Activated CD4-positive, alpha-beta memory T cell treated with anti-CD3 and anti-CD28 coated beads for 36 hours (primary cell): ENCODE measurements at regions of chr17 and their contacts with region 1.

Region 1: GRCh38 chr17:19648475-19649406 is at the start of gene ALDH3A2:
- DNase-seq: peak; percentile 97
- H3K4me3 Mint-ChIP-seq: peak within 1 kb of the TSS; percentile 91
- H3K27ac Mint-ChIP-seq: peak within 1 kb of the TSS; percentile 86
- H3K4me1 Mint-ChIP-seq: peaks cover 36% of the 10 kb centered on the region
- H3K27me3 Mint-ChIP-seq: no peaks in the 10 kb centered on the region
- total RNA-seq, gene ALDH3A2: 27.3 to 35.7 TPM

Region 2: GRCh38 chr17:19338031-19338990 is 310.4 kb before region 1 on chr17:
- CTCF ChIA-PET with region 1: no interaction called
- POLR2A ChIA-PET with region 1: no interaction called
- intact Hi-C with region 1: no loop called
- DNase-seq: peak; percentile 77
- H3K4me3 Mint-ChIP-seq: no peak overlapping the region
- H3K27ac Mint-ChIP-seq: no peak overlapping the region
- H3K4me1 Mint-ChIP-seq: no peaks in the 10 kb centered on the region
- H3K27me3 Mint-ChIP-seq: peaks cover 11% of the 10 kb centered on the region

Region 3: GRCh38 chr17:19377602-19378392 is 270.9 kb before region 1 on chr17:
- CTCF ChIA-PET with region 1: no interaction called
- POLR2A ChIA-PET with region 1: no interaction called
- intact Hi-C with region 1: loop called (anchors 5 kb)
- DNase-seq: peak; percentile 98
- H3K4me3 Mint-ChIP-seq: peak overlapping the region; percentile 97
- H3K27ac Mint-ChIP-seq: peak overlapping the region; percentile 99
- H3K4me1 Mint-ChIP-seq: peaks cover 16% of the 10 kb centered on the region
- H3K27me3 Mint-ChIP-seq: no peaks in the 10 kb centered on the region

Region 4: GRCh38 chr17:19507775-19508576 is 140.8 kb before region 1 on chr17:
- CTCF ChIA-PET with region 1: interaction called, 50 read pairs
- POLR2A ChIA-PET with region 1: interaction called, 3 read pairs
- intact Hi-C with region 1: loop called (anchors 2 kb)
- DNase-seq: peak; percentile 90
- H3K4me3 Mint-ChIP-seq: peak overlapping the region; percentile 84
- H3K27ac Mint-ChIP-seq: peak overlapping the region; percentile 90
- H3K4me1 Mint-ChIP-seq: peaks cover 8% of the 10 kb centered on the region
- H3K27me3 Mint-ChIP-seq: peaks cover 3% of the 10 kb centered on the region

Region 5: DNA sequence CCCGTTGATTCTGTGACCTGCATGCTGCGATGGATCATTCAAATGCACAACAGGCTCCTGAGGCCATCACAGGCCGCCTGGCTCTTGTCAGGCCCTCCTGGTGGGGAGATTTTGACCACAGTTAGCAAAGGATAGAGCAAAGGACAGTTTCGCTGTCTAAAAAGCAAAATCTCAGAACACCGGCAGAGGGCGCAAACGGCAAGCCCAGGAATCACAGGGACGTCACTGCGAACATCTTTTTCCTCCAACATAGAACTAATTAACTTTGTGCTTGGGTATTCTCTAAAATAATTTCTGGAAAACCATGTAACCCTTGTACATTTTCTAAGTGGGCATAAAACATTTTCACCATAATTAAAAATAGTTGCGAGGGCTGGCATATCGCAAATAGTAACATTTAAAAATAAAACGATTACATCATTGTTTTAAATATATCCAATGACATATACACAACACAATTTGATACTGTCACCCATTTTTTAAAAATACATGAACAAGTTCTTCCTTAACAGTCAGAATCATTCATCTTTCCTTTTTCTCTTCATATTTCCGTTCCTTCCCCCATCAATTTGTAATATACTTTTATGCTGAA is 134.7 kb before region 1 on chr17:
- CTCF ChIA-PET with region 1: interaction called, 50 read pairs
- POLR2A ChIA-PET with region 1: interaction called, 3 read pairs
- intact Hi-C with region 1: loop called (anchors 2 kb)
- DNase-seq: peak; percentile 76
- H3K4me3 Mint-ChIP-seq: no peak overlapping the region
- H3K27ac Mint-ChIP-seq: no peak overlapping the region
- H3K4me1 Mint-ChIP-seq: peaks cover 3% of the 10 kb centered on the region
- H3K27me3 Mint-ChIP-seq: no peaks in the 10 kb centered on the region

Region 6: DNA sequence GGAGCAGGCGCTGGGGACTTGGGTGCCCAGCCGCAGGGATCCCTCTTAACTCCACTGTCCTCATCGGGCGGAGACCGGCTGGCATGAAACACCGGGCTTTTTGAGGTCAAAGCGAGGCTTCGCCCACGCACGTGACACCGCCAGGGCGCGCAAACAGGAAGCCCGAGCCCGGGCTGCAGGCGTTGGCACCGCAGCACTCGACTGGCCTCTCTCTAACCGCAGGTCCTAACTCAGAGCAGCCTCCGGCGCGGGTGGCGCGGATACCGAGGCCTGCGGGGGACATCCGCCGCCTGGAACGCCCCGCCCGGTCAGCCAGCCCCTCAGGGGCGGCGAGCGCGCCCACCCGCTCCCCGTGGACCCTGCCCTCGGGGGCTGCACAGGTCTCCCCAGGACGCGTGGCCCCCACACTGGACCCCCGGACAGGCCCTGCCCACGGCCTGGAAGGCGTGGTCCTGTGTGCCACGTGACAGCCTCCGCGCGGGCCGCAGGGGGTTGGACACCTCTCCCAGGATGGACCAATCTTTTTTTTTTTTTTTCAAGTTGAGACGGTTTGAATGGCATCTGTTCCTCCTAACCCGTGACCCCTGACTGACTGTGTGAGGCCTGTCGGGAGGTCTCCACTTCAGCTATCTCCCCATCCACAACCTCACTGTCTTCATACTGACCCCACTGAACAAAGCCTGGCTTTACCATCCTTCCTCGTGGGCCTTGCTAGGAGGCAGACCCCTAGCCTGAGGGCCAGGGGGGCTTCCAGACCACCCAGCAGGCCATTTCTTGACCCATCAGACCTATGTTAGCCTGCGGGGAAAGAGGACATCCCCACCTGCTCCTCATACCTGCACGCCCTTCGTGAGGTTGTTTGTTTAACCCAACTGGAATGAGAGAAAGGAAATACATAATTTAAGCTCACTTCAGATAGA is 76.0 kb after region 1 on chr17:
- CTCF ChIA-PET with region 1: no interaction called
- POLR2A ChIA-PET with region 1: interaction called, 3 read pairs
- intact Hi-C with region 1: loop called (anchors 1 kb)
- DNase-seq: peak; percentile 86
- H3K4me3 Mint-ChIP-seq: peak overlapping the region; percentile 54
- H3K27ac Mint-ChIP-seq: peak overlapping the region; percentile 29
- H3K4me1 Mint-ChIP-seq: peaks cover 20% of the 10 kb centered on the region
- H3K27me3 Mint-ChIP-seq: no peaks in the 10 kb centered on the region

Region 7: DNA sequence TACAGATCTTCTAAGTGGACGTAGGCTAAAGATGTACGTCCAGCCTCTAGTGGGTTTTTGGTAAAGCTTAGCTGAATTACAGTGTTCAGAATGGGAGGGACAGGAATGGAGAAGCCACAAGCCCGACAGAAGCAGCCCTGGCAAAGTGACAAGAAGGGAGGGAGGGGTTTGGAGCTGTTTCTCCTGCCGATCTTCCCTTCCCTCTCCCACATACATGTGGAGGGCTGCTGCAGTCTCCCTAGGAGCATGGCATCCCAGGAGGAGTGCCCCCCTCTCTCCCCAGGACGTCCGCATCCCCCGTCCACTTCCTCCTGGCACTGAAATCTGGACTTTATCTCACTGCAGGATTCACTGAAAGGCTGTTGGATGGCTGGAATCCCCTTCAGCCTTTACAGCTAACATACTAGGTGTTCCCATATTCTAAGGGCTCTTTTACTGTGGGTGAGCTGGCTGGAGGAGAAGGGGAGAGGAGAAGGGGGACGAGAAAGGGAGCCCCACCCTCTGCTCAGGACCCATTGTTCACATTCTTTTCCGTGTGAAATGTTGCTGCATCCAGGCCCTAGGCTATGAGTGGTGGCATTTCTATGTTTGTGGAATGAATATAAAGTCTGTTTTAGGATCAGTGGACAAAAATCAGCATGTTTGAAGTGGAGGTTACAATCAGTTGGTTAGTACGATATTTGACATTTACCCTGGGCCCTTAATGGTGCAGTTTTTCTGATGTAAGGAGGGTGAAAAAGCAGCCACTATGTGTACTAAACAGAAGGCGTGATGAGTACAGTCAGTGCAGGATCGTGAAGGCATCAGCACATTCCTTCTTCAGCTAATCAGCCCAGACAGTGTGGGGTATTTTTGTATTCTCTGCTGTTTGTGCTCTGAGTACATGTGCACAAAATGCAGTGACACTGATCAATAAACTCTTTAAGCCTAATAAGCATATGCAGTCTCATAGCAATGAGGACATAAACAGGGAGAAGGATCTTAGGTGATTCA is 455.0 kb after region 1 on chr17:
- CTCF ChIA-PET with region 1: no interaction called
- POLR2A ChIA-PET with region 1: no interaction called
- intact Hi-C with region 1: no loop called
- DNase-seq: no peak
- H3K4me3 Mint-ChIP-seq: no peak overlapping the region
- H3K27ac Mint-ChIP-seq: no peak overlapping the region
- H3K4me1 Mint-ChIP-seq: peaks cover 13% of the 10 kb centered on the region
- H3K27me3 Mint-ChIP-seq: no peaks in the 10 kb centered on the region